ENCODE measurements at regions of chr17 and their contacts with region 1.

Region 1: GRCh38 chr17:82297714-82298537 is 19.5 kb downstream of the CD7 start:
- DNase-seq: peak; percentile 97
- ATAC-seq: peak; percentile 72
- H3K4me3 Mint-ChIP-seq: peak overlapping the region; percentile 90
- H3K27ac Mint-ChIP-seq: peak overlapping the region; percentile 100
- H3K4me1 Mint-ChIP-seq: peaks cover 78% of the 10 kb centered on the region
- H3K27me3 Mint-ChIP-seq: no peaks in the 10 kb centered on the region
- CTCF ChIP-seq: no peak

Region 2: DNA sequence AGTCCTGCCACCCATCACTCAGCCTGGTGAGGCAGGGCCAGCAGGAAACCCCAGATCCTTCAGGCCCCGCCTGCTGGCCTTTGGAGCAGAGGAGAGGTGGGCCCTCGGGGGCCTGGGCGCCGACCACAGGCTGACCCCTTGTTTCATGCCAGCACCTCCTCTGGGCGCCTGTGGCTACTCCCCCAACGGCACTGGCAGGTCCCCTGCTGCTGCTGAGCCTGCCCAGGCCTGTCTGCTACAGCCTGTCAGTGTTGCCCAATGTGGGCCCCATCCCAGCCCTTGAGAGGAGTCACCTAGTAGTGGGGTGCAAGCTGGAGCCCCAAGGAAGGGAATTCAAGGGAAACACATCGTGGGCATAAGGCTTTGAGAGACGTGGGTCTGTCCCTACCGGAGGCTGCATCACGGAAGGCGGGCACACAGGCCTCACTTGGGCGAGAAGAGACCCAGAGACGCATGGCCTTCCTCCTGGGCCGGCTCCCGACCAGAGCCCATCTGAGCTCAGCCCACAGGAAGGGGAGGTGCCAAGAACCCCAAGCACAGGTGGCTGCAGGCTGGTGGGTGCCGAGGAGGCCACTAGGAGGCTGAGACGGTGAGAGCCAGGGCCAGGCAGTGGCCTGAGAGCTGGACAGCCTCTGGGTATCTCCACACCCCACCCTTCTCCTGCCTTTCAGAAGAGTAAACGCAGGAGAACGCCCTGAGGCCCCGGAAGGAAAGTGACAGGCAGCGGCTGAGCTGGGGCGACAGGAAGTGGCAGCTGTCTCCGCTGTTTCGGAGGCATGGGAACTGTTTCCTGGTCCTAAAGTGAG is 191.8 kb before region 1 on chr17:
- CTCF ChIA-PET with region 1: no interaction called
- POLR2A ChIA-PET with region 1: no interaction called
- intact Hi-C with region 1: no loop called
- DNase-seq: peak; percentile 80
- ATAC-seq: peak; percentile 89
- H3K4me3 Mint-ChIP-seq: peak overlapping the region; percentile 90
- H3K27ac Mint-ChIP-seq: peak overlapping the region; percentile 95
- H3K4me1 Mint-ChIP-seq: peaks cover 27% of the 10 kb centered on the region
- H3K27me3 Mint-ChIP-seq: no peaks in the 10 kb centered on the region
- CTCF ChIP-seq: peak; percentile 50

Region 3: GRCh38 chr17:82228842-82229697 is 68.9 kb before region 1 on chr17 and contains the start of gene SLC16A3:
- CTCF ChIA-PET with region 1: no interaction called
- POLR2A ChIA-PET with region 1: interaction called, 12 read pairs
- intact Hi-C with region 1: no loop called
- DNase-seq: peak; percentile 74
- ATAC-seq: peak; percentile 52
- H3K4me3 Mint-ChIP-seq: peak within 1 kb of the TSS; percentile 92
- H3K27ac Mint-ChIP-seq: peak within 1 kb of the TSS; percentile 80
- H3K4me1 Mint-ChIP-seq: peaks cover 3% of the 10 kb centered on the region
- H3K27me3 Mint-ChIP-seq: no peaks in the 10 kb centered on the region
- CTCF ChIP-seq: no peak
- total RNA-seq, gene SLC16A3: 183 to 193 TPM

Region 4: GRCh38 chr17:82273327-82274133 is 24.4 kb before region 1 on chr17 and contains the start of gene CSNK1D:
- CTCF ChIA-PET with region 1: interaction called, 3 read pairs
- POLR2A ChIA-PET with region 1: interaction called, 14 read pairs
- intact Hi-C with region 1: no loop called
- DNase-seq: peak; percentile 95
- ATAC-seq: peak; percentile 86
- H3K4me3 Mint-ChIP-seq: peak within 1 kb of the TSS; percentile 88
- H3K27ac Mint-ChIP-seq: peak within 1 kb of the TSS; percentile 99
- H3K4me1 Mint-ChIP-seq: peaks cover 42% of the 10 kb centered on the region
- H3K27me3 Mint-ChIP-seq: no peaks in the 10 kb centered on the region
- CTCF ChIP-seq: no peak
- total RNA-seq, gene CSNK1D: 90.6 to 97.0 TPM

Region 5: DNA sequence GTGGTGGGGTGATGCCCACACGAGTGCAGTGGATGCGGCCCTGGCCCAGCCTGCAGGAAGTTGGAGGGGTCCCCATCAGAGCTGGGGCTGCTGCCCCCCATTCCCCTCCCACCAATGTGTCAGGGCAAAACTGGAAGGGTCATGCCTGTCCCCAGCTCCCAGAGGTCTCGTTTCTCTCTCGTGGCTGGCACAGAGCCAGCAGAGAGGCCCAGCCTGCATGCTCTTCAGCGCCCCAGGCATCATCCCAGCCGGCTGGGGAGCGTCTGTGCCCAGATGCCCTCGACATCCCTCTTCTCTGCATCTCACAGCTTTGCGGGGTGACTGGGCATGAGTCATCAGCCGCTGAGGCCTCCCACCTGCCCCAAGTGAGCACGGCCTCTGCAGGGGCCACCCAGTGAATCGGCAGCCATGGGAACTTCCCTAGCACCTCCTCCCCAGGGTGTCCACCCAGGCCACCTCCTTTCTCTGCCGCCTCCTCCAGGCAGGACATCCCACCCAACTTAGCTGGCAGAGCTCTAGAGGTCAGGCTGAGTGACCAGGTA is 14.6 kb before region 1 on chr17:
- CTCF ChIA-PET with region 1: no interaction called
- POLR2A ChIA-PET with region 1: interaction called, 20 read pairs
- intact Hi-C with region 1: no loop called
- DNase-seq: peak; percentile 82
- ATAC-seq: peak; percentile 86
- H3K4me3 Mint-ChIP-seq: no peak overlapping the region
- H3K27ac Mint-ChIP-seq: peak overlapping the region; percentile 52
- H3K4me1 Mint-ChIP-seq: peaks cover 23% of the 10 kb centered on the region
- H3K27me3 Mint-ChIP-seq: no peaks in the 10 kb centered on the region
- CTCF ChIP-seq: no peak

Region 6: GRCh38 chr17:82315703-82316358 is 17.9 kb after region 1 on chr17:
- CTCF ChIA-PET with region 1: interaction called, 68 read pairs
- POLR2A ChIA-PET with region 1: interaction called, 227 read pairs
- intact Hi-C with region 1: no loop called
- DNase-seq: peak; percentile 66
- ATAC-seq: peak; percentile 38
- H3K4me3 Mint-ChIP-seq: peak overlapping the region; percentile 88
- H3K27ac Mint-ChIP-seq: no peak overlapping the region
- H3K4me1 Mint-ChIP-seq: peaks cover 7% of the 10 kb centered on the region
- H3K27me3 Mint-ChIP-seq: no peaks in the 10 kb centered on the region
- CTCF ChIP-seq: no peak

Region 7: DNA sequence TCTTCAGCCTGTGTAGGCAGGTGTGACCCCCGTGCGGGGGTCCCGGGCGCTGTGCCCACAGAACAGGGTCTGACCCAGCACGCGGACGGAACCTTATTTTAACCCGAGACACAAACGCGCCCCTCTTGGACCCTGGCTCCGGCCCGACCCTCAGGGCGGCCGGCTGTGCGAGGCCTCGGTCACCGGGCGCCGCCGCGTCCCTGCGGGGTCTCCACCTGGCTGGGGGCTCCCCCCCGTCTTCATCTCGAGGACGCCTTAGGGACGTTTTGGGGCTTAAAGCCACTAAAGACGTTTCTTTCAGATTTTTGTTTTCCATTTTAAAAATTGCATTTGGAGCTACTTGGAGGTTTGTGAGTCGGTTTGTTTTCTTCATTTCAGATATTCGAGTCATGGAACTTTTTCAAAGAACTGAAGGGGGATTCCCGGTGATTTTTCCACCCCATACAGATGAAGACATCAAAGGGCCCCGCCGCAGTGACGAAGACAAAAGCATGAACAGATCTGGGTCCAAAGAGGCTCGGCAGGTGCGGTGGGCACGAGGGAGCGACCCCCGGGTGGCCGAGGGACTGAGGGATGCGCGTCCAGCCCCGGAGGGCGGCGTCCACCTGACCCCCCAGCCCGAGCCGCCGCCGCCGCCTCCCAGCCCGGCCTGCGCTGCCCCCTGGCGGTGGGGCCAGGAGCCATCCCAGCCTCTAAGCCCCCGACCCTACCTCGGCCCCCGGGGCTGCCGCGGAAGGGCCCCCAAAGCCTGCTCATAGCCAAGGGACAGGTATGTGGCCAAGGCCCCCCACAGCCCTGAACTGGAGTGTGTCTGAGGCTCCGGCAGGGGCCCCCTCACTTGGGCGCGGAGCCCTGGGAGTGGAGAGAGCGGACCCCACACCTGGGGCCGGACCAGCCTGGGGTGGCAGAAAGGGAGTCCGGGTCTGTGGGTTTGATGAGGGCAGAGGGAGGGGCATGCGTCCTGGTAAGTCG is 23.3 kb after region 1 on chr17:
- CTCF ChIA-PET with region 1: interaction called, 68 read pairs
- POLR2A ChIA-PET with region 1: interaction called, 227 read pairs
- intact Hi-C with region 1: no loop called
- DNase-seq: peak; percentile 96
- ATAC-seq: peak; percentile 24
- H3K4me3 Mint-ChIP-seq: peak overlapping the region; percentile 83
- H3K27ac Mint-ChIP-seq: peak overlapping the region; percentile 98
- H3K4me1 Mint-ChIP-seq: peaks cover 32% of the 10 kb centered on the region
- H3K27me3 Mint-ChIP-seq: no peaks in the 10 kb centered on the region
- CTCF ChIP-seq: peak; percentile 100

Region 8: DNA sequence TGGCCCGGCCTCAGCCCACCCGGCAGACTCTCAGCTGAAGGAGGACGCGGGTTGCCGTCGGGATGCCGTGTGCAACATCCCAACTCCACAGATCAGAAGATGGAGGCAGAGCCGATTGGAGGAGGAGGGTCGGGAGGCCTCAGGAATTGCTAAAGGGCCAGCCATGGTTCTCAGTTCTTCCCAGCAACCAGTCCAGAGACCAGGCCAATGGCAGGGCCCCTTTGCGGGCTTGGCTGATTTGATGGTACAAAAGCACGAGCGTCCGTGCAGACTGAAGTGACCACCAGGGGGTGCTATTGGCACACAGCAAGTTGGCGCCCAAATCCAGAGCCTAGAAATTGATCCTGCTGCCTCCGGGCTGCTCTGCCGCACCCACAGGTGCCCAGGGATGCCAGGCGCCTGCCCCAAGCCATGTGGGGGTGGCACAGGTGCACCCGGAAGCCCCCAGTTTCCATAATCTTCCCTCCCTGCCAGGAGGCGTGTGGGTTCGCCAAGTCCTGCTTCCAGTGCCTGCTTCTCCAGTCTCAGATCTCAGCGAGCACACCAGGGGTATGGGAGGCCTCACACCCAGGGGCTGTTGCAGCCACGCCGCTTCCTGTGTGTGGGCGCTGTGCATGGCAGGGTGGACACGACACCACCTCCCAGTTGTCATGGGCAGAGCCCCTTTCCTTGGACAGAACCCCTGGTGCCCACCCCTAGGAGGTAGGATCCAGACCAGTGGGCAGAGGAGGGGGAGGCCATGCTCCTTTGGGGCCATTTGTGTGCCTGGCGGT is 54.0 kb after region 1 on chr17:
- CTCF ChIA-PET with region 1: interaction called, 14 read pairs
- POLR2A ChIA-PET with region 1: no interaction called
- intact Hi-C with region 1: no loop called
- DNase-seq: peak; percentile 93
- ATAC-seq: peak; percentile 82
- H3K4me3 Mint-ChIP-seq: no peak overlapping the region
- H3K27ac Mint-ChIP-seq: no peak overlapping the region
- H3K4me1 Mint-ChIP-seq: peaks cover 6% of the 10 kb centered on the region
- H3K27me3 Mint-ChIP-seq: peaks cover 8% of the 10 kb centered on the region
- CTCF ChIP-seq: peak; percentile 91

Region 9: GRCh38 chr17:82400830-82401229 is 102.9 kb after region 1 on chr17:
- CTCF ChIA-PET with region 1: no interaction called
- POLR2A ChIA-PET with region 1: no interaction called
- intact Hi-C with region 1: no loop called
- DNase-seq: peak; percentile 73
- ATAC-seq: peak; percentile 88
- H3K4me3 Mint-ChIP-seq: peak overlapping the region; percentile 60
- H3K27ac Mint-ChIP-seq: peak overlapping the region; percentile 64
- H3K4me1 Mint-ChIP-seq: peaks cover 11% of the 10 kb centered on the region
- H3K27me3 Mint-ChIP-seq: no peaks in the 10 kb centered on the region
- CTCF ChIP-seq: no peak

Measured in activated CD8-positive, alpha-beta T cell treated with anti-CD3 and anti-CD28 coated beads for 36 hours (primary cell).